Heart left ventricle (tissue), 16 donors: ENCODE measurements at regions of chr2 and their contacts with region 1.

Region 1: GRCh38 chr2:40244675-40245074 is 207.2 kb downstream of the SLC8A1 start:
- DNase-seq: peak in 4 of 5 donors; percentile 61 to 70 (median 68)
- ATAC-seq: peak; percentile 34 to 70 (median 68)
- H3K4me3 ChIP-seq: no peak overlapping the region
- H3K27ac ChIP-seq: peak overlapping the region in 10 of 12 donors; percentile 23 to 68 (median 54)
- H3K4me1 ChIP-seq: peaks cover 0 to 76% (median 46%) of the 10 kb centered on the region in 12 donors
- H3K27me3 ChIP-seq: no peaks in the 10 kb centered on the region
- CTCF ChIP-seq: peak; percentile 16 to 65 (median 54)
- POLR2A ChIP-seq: no peak

Region 2: DNA sequence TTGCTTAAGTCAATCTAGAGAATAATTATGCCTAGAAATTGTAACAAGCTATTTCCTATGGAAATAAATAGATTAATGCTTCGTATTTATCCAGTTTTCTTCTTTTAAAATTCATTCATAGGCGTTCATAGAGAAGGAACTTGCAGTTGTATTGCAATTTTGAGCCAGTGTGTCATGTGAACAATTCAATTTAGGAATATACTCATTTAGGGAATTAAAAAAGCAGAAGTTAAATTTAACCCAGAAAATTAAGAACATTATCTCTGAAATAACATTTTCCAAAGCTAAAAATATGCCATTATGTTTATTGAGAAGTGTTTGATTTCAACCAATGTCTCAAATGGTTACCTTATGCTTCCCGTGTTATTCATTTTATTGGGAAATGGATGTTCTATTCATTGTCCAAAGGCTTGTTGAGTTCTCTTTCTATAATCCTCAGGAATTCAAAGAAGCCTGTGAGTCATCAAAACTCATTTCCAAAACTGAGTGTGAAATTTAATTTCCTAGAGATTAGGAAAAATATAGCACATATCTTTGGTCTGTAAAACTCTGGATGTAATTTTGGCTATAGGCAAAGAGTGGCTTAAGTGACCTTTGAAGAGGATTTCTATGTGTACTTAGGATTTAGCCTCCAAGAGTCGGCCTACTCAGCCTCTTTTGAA is 107.5 kb after region 1 on chr2:
- intact Hi-C with region 1: loop called in 1 of 10 experiments (anchors 10 kb)
- DNase-seq: no peak
- ATAC-seq: peak in 1 of 4 donors; percentile 19
- H3K4me3 ChIP-seq: no peak overlapping the region
- H3K27ac ChIP-seq: peak overlapping the region; percentile 22 to 80 (median 62)
- H3K4me1 ChIP-seq: peaks cover 0 to 69% (median 43%) of the 10 kb centered on the region in 12 donors
- H3K27me3 ChIP-seq: no peaks in the 10 kb centered on the region
- CTCF ChIP-seq: no peak
- POLR2A ChIP-seq: no peak

Region 3: GRCh38 chr2:40431600-40431955 is 186.9 kb after region 1 on chr2:
- intact Hi-C with region 1: loop called in 1 of 10 experiments (anchors 10 kb)
- DNase-seq: peak in 4 of 5 donors; percentile 47 to 71 (median 57)
- ATAC-seq: peak; percentile 53 to 74 (median 70)
- H3K4me3 ChIP-seq: no peak overlapping the region
- H3K27ac ChIP-seq: peak overlapping the region in 10 of 12 donors; percentile 7 to 77 (median 51)
- H3K4me1 ChIP-seq: peaks cover 3 to 98% (median 65%) of the 10 kb centered on the region in 12 donors
- H3K27me3 ChIP-seq: no peaks in the 10 kb centered on the region
- CTCF ChIP-seq: no peak
- POLR2A ChIP-seq: no peak